Activated CD4-positive, alpha-beta T cell treated with anti-CD3 and anti-CD28 coated beads for 36 hours (primary cell): ENCODE measurements at regions of chr11 and their contacts with region 1.

Region 1: GRCh38 chr11:46489661-46490560 is 98.3 kb upstream of the CHRM4 start:
- DNase-seq: peak; percentile 51
- ATAC-seq: peak; percentile 60
- H3K4me3 Mint-ChIP-seq: no peak overlapping the region
- H3K27ac Mint-ChIP-seq: no peak overlapping the region
- H3K4me1 Mint-ChIP-seq: peaks cover 4% of the 10 kb centered on the region
- H3K27me3 Mint-ChIP-seq: no peaks in the 10 kb centered on the region

Region 2: GRCh38 chr11:46380340-46381047 is 109.4 kb before region 1 on chr11:
- CTCF ChIA-PET with region 1: no interaction called
- POLR2A ChIA-PET with region 1: no interaction called
- intact Hi-C with region 1: no loop called
- DNase-seq: peak; percentile 90
- ATAC-seq: peak; percentile 65
- H3K4me3 Mint-ChIP-seq: peak overlapping the region; percentile 72
- H3K27ac Mint-ChIP-seq: peak overlapping the region; percentile 58
- H3K4me1 Mint-ChIP-seq: peaks cover 8% of the 10 kb centered on the region
- H3K27me3 Mint-ChIP-seq: peaks cover 8% of the 10 kb centered on the region

Region 3: DNA sequence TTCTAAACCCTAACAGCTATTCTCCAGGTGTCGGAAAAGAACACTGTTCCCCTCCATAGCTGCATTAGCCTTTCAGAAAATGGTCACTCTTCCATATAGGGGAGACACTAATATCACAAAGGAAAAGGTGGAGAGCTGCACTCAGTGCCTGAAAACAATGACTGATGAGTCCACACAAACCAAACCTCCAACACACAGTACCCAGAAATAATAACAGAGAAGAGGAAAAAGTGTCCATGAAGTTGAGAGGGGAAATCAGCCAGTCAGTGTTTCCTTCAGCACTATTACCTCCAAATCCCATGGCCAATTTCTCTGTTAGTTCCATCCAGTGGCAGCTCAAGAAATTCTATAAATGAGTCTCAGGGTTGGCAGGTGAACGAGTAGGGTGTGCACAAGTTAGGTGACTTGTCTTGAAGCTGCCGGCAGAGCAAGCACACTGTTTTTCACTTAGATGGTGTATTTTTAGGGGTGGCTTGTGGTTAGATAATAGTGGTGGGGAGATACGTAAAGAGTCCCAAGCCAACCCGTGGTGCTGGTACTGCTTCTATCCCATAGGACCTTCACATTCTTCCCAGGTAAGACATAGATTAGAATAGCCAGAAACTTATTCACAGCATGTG is 13.9 kb before region 1 on chr11:
- CTCF ChIA-PET with region 1: interaction called, 23 read pairs
- POLR2A ChIA-PET with region 1: no interaction called
- intact Hi-C with region 1: no loop called
- DNase-seq: no peak
- ATAC-seq: peak; percentile 59
- H3K4me3 Mint-ChIP-seq: no peak overlapping the region
- H3K27ac Mint-ChIP-seq: peak overlapping the region; percentile 67
- H3K4me1 Mint-ChIP-seq: peaks cover 35% of the 10 kb centered on the region
- H3K27me3 Mint-ChIP-seq: no peaks in the 10 kb centered on the region

Region 4: GRCh38 chr11:46524201-46524770 is 34.4 kb after region 1 on chr11:
- CTCF ChIA-PET with region 1: interaction called, 30 read pairs
- POLR2A ChIA-PET with region 1: no interaction called
- intact Hi-C with region 1: loop called in 1 of 2 experiments (anchors 1 kb)
- DNase-seq: no peak
- ATAC-seq: no peak
- H3K4me3 Mint-ChIP-seq: no peak overlapping the region
- H3K27ac Mint-ChIP-seq: no peak overlapping the region
- H3K4me1 Mint-ChIP-seq: peaks cover 30% of the 10 kb centered on the region
- H3K27me3 Mint-ChIP-seq: no peaks in the 10 kb centered on the region

Region 5: DNA sequence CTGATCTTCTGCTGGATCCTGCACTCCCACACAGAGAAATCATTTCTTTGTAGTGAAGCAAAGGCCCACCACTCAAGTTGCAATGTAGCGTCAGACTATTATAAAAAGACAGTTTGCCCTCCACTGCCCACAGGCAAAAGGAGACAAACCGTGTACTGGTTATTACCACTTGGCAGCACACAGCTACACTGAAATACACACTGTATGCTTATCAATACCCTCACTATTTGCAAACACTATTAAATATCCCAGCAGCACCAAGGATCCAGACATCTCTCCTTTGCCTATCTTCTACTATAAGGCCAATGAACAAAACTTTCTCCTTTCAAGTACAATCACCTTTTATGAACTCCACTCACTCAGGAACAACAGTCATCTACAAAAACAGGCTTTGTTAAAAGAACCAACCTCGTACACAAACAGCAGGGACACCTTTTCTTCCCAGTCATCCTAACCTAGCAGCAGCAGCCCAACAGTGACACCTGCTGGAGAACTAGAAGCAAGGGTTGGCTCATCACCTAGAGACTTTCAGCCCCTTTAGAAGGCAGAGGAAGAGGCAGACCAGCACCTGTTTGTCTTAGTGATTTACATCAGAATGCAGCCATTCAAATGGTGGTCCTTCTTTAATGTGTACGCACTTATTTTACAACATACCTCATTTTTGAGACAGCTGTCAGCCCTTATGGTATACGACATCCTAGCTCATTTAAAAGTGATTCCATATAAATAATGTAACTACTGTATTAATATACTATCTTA is 47.8 kb after region 1 on chr11:
- CTCF ChIA-PET with region 1: interaction called, 13 read pairs
- POLR2A ChIA-PET with region 1: no interaction called
- intact Hi-C with region 1: loop called in 1 of 2 experiments (anchors 2 kb)
- DNase-seq: peak; percentile 79
- ATAC-seq: peak; percentile 99
- H3K4me3 Mint-ChIP-seq: no peak overlapping the region
- H3K27ac Mint-ChIP-seq: peak overlapping the region; percentile 24
- H3K4me1 Mint-ChIP-seq: peaks cover 18% of the 10 kb centered on the region
- H3K27me3 Mint-ChIP-seq: no peaks in the 10 kb centered on the region